Mucosa of descending colon (tissue), 3 donors: ENCODE measurements at regions of chr13 and their contacts with region 1.

Region 1: DNA sequence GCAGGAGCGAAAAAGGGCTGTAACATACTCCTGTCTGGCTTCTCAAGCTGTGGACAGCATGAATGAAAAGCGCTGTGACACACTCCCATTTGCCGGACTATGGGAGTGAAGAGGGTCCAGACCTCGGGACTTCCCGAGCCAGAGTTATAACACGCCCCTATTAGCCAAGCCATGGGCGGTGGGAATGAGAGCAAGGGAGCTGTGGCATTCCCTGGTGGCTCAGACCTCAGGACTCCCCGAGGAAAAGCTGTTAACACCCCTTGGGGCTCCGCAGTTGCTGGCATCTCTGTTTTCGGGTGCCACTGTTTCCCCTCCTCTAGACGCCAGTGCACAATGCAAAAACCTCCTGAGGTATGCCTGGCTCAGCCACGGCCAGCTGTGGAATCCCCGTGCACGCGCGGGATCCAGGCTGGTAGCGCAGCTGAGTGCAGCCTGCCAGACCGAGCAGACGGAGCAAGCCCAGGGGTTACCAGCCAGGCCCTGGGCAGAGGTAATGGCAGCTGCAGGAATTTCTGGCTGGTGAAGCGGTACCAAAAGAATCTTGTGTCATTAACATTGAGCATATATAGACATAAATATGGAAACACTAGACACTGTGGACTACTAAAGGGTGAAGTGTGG is 1534.6 kb upstream of the PRR20A start:
- DNase-seq: peak in 1 of 3 donors; percentile 34
- ATAC-seq: no peak
- H3K4me3 ChIP-seq: no peak overlapping the region
- H3K4me1 ChIP-seq: no peaks in the 10 kb centered on the region
- CTCF ChIP-seq: no peak

Region 2: DNA sequence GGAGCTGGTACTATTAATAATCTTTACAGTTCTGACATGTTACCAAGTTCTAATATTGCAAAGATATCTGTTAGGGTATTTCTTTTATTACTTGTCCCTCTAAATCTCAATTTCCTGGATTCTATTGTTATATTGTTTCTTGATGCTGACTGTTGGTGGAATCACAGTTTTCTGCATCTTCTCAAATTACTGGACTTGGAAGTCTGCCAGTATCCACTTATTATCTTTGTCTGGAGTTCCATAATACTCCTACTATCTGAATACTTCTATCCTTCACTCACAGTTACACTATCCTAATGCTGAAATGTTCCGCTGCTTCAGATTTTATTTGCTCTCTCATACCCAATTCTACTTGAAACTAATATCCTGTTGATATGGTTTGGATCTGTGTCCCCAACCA is 451.1 kb before region 1 on chr13:
- intact Hi-C with region 1: no loop called
- DNase-seq: no peak
- ATAC-seq: no peak
- H3K4me3 ChIP-seq: no peak overlapping the region
- H3K4me1 ChIP-seq: no peaks in the 10 kb centered on the region
- CTCF ChIP-seq: no peak

Region 3: GRCh38 chr13:55528434-55528833 is 77.7 kb before region 1 on chr13:
- intact Hi-C with region 1: no loop called
- DNase-seq: no peak
- ATAC-seq: no peak
- H3K4me3 ChIP-seq: no peak overlapping the region
- H3K4me1 ChIP-seq: no peaks in the 10 kb centered on the region
- CTCF ChIP-seq: no peak

Region 4: GRCh38 chr13:55543053-55543452 is 63.1 kb before region 1 on chr13:
- intact Hi-C with region 1: loop called in 1 of 2 experiments (anchors 10 kb)
- DNase-seq: no peak
- ATAC-seq: no peak
- H3K4me3 ChIP-seq: no peak overlapping the region
- H3K4me1 ChIP-seq: no peaks in the 10 kb centered on the region
- CTCF ChIP-seq: no peak

Region 5: DNA sequence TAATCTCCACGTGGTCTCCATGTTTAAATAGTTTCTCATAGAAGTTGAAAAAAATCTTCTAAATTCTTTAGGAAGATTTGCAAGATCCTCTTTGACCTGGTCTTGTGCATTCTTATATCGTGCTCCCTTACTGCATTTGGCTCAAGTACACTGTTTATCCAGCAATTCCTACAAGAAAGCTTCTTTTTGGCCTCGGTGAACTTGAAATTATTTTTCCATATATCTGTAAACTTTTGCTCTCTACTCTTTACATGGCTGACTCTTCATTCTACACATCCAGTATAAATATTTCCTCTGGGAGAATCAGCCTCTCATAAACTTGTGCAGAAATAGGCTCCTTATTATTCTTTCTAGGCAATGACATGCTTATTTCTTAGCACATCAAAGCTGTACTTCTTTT is 76.6 kb after region 1 on chr13:
- intact Hi-C with region 1: no loop called
- DNase-seq: no peak
- ATAC-seq: no peak
- H3K4me3 ChIP-seq: no peak overlapping the region
- H3K4me1 ChIP-seq: no peaks in the 10 kb centered on the region
- CTCF ChIP-seq: no peak